ENCODE measurements at regions of chr6 and their contacts with region 1.

Region 1: DNA sequence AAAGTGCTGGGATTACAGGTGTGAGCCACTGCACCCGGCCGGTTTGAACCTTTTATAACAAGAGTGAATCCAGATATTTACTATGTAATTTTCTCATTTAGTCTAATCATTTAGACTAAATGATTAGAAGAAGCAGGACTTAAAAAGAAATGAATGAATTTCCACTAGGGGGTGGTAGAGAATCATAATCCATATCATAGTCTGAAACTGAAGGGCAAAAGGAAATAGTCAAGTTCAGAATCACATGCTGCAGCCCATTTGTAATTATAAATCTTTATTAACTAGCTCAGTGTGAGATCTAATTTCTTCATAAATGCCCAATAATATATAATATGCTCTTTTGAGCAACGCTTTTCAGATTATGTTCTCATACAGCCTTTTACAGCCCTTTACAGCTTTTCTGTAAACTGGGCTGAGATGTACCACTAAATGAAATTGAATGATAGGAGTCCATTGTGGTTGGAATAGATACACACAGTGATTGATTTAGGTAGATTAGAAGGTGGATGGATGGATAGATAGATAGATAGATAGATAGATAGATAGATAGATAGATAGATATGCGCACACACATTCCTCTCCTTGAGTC is 31.8 kb downstream of the PSMB9 start:
- DNase-seq: no peak
- H3K4me3 ChIP-seq: no peak overlapping the region
- H3K27ac ChIP-seq: no peak overlapping the region
- H3K4me1 ChIP-seq: peaks cover 0 to 7% of the 10 kb centered on the region in 2 donors
- H3K27me3 ChIP-seq: no peaks in the 10 kb centered on the region
- CTCF ChIP-seq: peak; percentile 58 to 78 (median 76)
- POLR2A ChIP-seq: no peak

Region 2: DNA sequence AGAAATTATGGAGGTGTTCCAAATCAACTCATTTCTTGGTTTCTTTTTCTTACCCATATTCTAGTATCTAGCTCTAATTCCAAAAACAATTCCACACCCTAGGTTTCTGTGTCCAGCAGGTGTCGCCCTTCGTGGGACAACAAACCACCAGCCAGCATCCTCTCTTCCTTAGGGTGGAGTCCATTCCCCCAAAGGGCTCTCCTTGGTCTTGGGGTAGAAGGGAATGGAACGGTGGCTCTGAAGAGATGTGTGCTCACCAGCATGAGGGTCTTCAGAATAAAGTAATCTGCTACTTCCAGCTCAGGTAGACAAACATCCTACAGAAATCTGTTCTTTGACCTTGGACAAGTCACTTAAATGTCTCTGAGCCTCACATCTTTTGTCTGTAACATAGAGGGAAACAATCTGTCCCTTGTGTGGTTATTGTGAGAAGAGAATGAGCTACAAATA is 47.9 kb after region 1 on chr6:
- intact Hi-C with region 1: loop called (anchors 10 kb)
- DNase-seq: peak; percentile 78 to 84
- H3K4me3 ChIP-seq: no peak overlapping the region
- H3K27ac ChIP-seq: no peak overlapping the region
- H3K4me1 ChIP-seq: no peaks in the 10 kb centered on the region
- H3K27me3 ChIP-seq: no peaks in the 10 kb centered on the region
- CTCF ChIP-seq: peak; percentile 79 to 89 (median 82)
- POLR2A ChIP-seq: no peak